Panc1 (cell line): ENCODE measurements at regions of chr10 and their contacts with region 1.

Region 1: GRCh38 chr10:104391150-104391968 is 37.7 kb downstream of the CFAP58 start:
- DNase-seq: no peak
- ATAC-seq: no peak
- H3K4me3 ChIP-seq: no peak overlapping the region
- H3K27ac ChIP-seq: no peak overlapping the region
- H3K4me1 ChIP-seq: no peaks in the 10 kb centered on the region
- H3K27me3 ChIP-seq: peaks cover 39% of the 10 kb centered on the region
- CTCF ChIP-seq: no peak

Region 2: DNA sequence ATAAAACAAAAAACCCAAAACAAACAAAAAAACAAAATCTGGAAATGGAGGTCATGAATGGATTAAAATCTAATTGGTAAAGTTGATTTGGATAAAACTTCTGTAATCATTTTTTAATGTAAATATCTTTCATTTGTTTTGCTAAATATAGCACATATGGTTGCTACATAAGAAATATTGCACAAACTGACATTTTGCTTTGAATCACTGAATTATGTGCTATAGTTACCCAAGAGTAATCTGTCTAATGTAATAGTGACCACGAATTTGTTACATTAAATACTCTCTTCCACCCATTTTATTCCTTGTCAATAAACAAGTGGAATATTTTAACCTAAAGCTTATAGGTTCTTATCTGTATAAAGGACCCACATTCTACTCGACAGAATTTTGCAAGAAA is 31.5 kb before region 1 on chr10:
- CTCF ChIA-PET with region 1: interaction called, 17 read pairs
- POLR2A ChIA-PET with region 1: no interaction called
- in situ Hi-C with region 1: no loop called
- intact Hi-C with region 1: no loop called
- DNase-seq: no peak
- ATAC-seq: no peak
- H3K4me3 ChIP-seq: no peak overlapping the region
- H3K27ac ChIP-seq: no peak overlapping the region
- H3K4me1 ChIP-seq: no peaks in the 10 kb centered on the region
- H3K27me3 ChIP-seq: no peaks in the 10 kb centered on the region
- CTCF ChIP-seq: no peak